ENCODE measurements at regions of chr2 and their contacts with region 1.

Region 1: DNA sequence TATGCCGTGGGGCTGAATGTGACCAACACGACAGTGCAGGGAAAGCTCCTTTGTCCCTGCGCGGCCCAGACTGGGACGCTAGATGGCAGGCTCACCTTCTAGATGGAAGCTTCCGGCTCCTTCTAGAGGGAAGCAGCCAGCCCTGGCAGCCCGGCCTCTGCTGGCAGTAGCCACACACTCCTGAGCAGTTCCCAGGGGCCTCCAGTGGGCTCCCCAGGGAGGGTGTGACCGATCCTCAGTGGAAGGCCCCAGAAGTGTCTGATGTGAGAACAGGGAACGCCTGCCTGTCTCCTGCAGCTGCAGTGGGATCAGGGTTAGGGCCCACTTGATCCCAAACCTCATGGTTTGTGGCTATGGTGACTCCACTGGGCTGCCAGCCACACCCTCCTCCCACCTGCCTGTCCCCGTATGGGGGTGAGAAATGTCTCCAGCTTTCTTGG is 48.5 kb upstream of the LRPPRC start:
- DNase-seq: peak; percentile 85
- H3K4me3 Mint-ChIP-seq: no peak overlapping the region
- H3K27ac Mint-ChIP-seq: no peak overlapping the region
- H3K4me1 Mint-ChIP-seq: peaks cover 3% of the 10 kb centered on the region
- H3K27me3 Mint-ChIP-seq: peaks cover 2% of the 10 kb centered on the region

Region 2: DNA sequence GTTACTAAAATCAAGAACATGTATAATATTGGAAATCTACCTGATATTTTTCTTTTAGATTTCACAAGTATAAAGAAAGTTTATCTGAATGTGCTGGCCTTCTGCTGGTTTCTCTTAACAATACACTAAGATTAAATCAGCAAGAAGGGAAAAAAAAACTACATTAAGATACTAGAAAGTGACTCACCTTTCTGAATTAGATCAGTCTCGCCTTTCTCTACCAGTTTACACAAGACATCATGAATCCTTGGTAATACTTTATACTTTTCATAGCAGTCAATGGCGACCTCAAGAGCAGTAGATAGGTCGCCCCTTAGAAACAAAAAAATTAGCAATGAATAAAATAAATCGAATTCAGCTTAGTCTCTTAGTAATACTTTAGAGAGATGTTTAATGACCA is 109.7 kb before region 1 on chr2:
- CTCF ChIA-PET with region 1: no interaction called
- POLR2A ChIA-PET with region 1: no interaction called
- DNase-seq: no peak
- H3K4me3 Mint-ChIP-seq: no peak overlapping the region
- H3K27ac Mint-ChIP-seq: no peak overlapping the region
- H3K4me1 Mint-ChIP-seq: peaks cover 11% of the 10 kb centered on the region
- H3K27me3 Mint-ChIP-seq: no peaks in the 10 kb centered on the region

Region 3: GRCh38 chr2:44016282-44016681 is 28.0 kb before region 1 on chr2:
- CTCF ChIA-PET with region 1: no interaction called
- POLR2A ChIA-PET with region 1: no interaction called
- DNase-seq: peak; percentile 53
- H3K4me3 Mint-ChIP-seq: no peak overlapping the region
- H3K27ac Mint-ChIP-seq: no peak overlapping the region
- H3K4me1 Mint-ChIP-seq: no peaks in the 10 kb centered on the region
- H3K27me3 Mint-ChIP-seq: peaks cover 15% of the 10 kb centered on the region

Region 4: GRCh38 chr2:44033947-44034346 is 10.4 kb before region 1 on chr2:
- CTCF ChIA-PET with region 1: interaction called, 12 read pairs
- POLR2A ChIA-PET with region 1: no interaction called
- DNase-seq: no peak
- H3K4me3 Mint-ChIP-seq: no peak overlapping the region
- H3K27ac Mint-ChIP-seq: no peak overlapping the region
- H3K4me1 Mint-ChIP-seq: no peaks in the 10 kb centered on the region
- H3K27me3 Mint-ChIP-seq: peaks cover 16% of the 10 kb centered on the region

Region 5: GRCh38 chr2:44093970-44094369 is 49.7 kb after region 1 on chr2:
- CTCF ChIA-PET with region 1: no interaction called
- POLR2A ChIA-PET with region 1: no interaction called
- DNase-seq: no peak
- H3K4me3 Mint-ChIP-seq: no peak overlapping the region
- H3K27ac Mint-ChIP-seq: no peak overlapping the region
- H3K4me1 Mint-ChIP-seq: peaks cover 30% of the 10 kb centered on the region
- H3K27me3 Mint-ChIP-seq: no peaks in the 10 kb centered on the region

Region 6: DNA sequence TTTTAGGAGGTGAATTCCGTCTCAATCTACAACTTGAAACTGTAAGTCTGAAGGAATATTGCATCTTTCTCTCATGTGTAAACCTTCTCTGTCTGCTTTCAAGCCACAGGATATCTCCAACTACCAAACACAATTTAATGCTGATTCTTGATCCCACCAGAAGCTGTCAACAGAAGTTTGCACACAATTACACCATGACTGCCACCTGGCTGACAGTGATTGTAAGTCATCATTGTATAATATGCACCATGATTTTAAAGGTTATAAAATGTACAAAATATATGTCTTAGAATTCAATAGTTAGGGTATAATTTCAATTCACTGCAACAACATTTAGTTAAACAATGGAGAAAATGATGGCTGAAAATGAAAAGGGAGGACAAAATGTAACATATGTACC is 298.6 kb after region 1 on chr2:
- CTCF ChIA-PET with region 1: interaction called, 13 read pairs
- POLR2A ChIA-PET with region 1: no interaction called
- DNase-seq: peak; percentile 21
- H3K4me3 Mint-ChIP-seq: no peak overlapping the region
- H3K27ac Mint-ChIP-seq: no peak overlapping the region
- H3K4me1 Mint-ChIP-seq: no peaks in the 10 kb centered on the region
- H3K27me3 Mint-ChIP-seq: no peaks in the 10 kb centered on the region